MCF 10A (cell line): ENCODE measurements at regions of chr2 and their contacts with region 1.

Region 1: GRCh38 chr2:180707884-180708205 is 272.6 kb upstream of the UBE2E3 start:
- DNase-seq: peak; percentile 98
- H3K4me3 Mint-ChIP-seq: no peak overlapping the region
- H3K27ac Mint-ChIP-seq: peak overlapping the region; percentile 7
- H3K4me1 Mint-ChIP-seq: peaks cover 24% of the 10 kb centered on the region
- H3K27me3 Mint-ChIP-seq: no peaks in the 10 kb centered on the region
- CTCF ChIP-seq: no peak

Region 2: GRCh38 chr2:180520206-180520605 is 187.6 kb before region 1 on chr2:
- CTCF ChIA-PET with region 1: no interaction called
- POLR2A ChIA-PET with region 1: no interaction called
- intact Hi-C with region 1: loop called (anchors 10 kb)
- DNase-seq: peak; percentile 23
- H3K4me3 Mint-ChIP-seq: no peak overlapping the region
- H3K27ac Mint-ChIP-seq: peak overlapping the region; percentile 57
- H3K4me1 Mint-ChIP-seq: peaks cover 29% of the 10 kb centered on the region
- H3K27me3 Mint-ChIP-seq: no peaks in the 10 kb centered on the region
- CTCF ChIP-seq: no peak

Region 3: DNA sequence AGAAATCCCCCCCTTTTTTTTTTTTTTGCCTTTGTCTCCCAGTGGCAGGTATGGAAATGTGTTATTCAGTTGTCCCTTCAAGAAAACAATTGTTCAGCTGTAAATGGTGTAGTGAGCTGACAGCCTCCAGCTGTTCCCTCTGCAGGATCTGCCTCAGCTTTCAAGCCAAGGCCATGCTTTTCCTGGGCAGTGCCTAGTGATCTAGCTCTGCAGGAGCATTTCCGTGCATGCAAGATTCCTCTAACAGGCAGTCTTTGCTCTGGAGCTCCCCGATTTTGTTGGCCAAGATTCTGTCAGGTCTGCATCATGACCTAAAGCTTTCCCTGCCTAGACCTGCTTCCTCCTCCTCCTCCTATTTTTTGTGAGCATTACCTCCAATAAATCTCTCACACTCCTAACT is 28.2 kb before region 1 on chr2:
- CTCF ChIA-PET with region 1: no interaction called
- POLR2A ChIA-PET with region 1: interaction called, 18 read pairs
- intact Hi-C with region 1: no loop called
- DNase-seq: no peak
- H3K4me3 Mint-ChIP-seq: no peak overlapping the region
- H3K27ac Mint-ChIP-seq: no peak overlapping the region
- H3K4me1 Mint-ChIP-seq: peaks cover 23% of the 10 kb centered on the region
- H3K27me3 Mint-ChIP-seq: no peaks in the 10 kb centered on the region
- CTCF ChIP-seq: no peak

Region 4: GRCh38 chr2:180722551-180723239 is 14.8 kb after region 1 on chr2:
- CTCF ChIA-PET with region 1: interaction called, 4 read pairs
- POLR2A ChIA-PET with region 1: interaction called, 15 read pairs
- intact Hi-C with region 1: no loop called
- DNase-seq: peak; percentile 76
- H3K4me3 Mint-ChIP-seq: no peak overlapping the region
- H3K27ac Mint-ChIP-seq: peak overlapping the region; percentile 28
- H3K4me1 Mint-ChIP-seq: peaks cover 5% of the 10 kb centered on the region
- H3K27me3 Mint-ChIP-seq: no peaks in the 10 kb centered on the region
- CTCF ChIP-seq: no peak

Region 5: GRCh38 chr2:180742809-180743208 is 35.0 kb after region 1 on chr2:
- CTCF ChIA-PET with region 1: no interaction called
- POLR2A ChIA-PET with region 1: no interaction called
- intact Hi-C with region 1: no loop called
- DNase-seq: peak; percentile 76
- H3K4me3 Mint-ChIP-seq: no peak overlapping the region
- H3K27ac Mint-ChIP-seq: peak overlapping the region; percentile 83
- H3K4me1 Mint-ChIP-seq: peaks cover 23% of the 10 kb centered on the region
- H3K27me3 Mint-ChIP-seq: no peaks in the 10 kb centered on the region
- CTCF ChIP-seq: no peak